Activated B cell treated with CpG ODN at 0.5 μM for 24 hours (primary cell): ENCODE measurements at regions of chr10 and their contacts with region 1.

Region 1: DNA sequence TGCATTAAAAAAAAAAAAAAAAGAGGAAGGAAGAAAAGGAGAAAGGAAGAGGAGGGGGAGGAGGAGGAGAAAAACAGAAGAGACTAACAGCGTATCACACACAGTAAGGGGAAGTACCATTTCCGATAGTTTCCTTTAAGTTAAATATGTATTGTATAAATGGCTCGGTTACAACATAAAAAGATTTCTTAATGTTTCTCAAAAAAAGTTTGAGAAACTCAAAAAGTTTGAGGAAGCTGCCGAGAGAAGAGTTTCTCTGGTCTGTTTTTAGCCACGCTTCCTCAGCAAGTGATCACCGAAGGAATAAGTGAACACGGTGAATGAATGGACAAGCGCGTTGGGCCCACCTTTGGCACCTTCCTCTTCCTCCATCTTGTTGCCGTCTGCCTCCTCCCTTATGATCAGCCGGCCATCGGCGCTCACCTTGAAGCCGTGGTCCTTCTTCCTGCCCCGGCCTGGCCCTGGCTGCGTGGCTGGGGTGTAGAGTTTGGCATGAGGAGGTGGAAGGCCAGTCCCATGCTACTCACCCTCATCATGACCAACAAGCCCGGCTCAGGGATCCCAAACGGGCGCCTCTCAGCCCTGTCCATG is 31.3 kb upstream of the FRAT2 start:
- DNase-seq: no peak
- ATAC-seq: peak; percentile 85
- H3K4me3 Mint-ChIP-seq: peak overlapping the region; percentile 56
- H3K27ac Mint-ChIP-seq: peak overlapping the region; percentile 90
- H3K4me1 Mint-ChIP-seq: peaks cover 36% of the 10 kb centered on the region
- H3K27me3 Mint-ChIP-seq: no peaks in the 10 kb centered on the region
- CTCF ChIP-seq: no peak

Region 2: DNA sequence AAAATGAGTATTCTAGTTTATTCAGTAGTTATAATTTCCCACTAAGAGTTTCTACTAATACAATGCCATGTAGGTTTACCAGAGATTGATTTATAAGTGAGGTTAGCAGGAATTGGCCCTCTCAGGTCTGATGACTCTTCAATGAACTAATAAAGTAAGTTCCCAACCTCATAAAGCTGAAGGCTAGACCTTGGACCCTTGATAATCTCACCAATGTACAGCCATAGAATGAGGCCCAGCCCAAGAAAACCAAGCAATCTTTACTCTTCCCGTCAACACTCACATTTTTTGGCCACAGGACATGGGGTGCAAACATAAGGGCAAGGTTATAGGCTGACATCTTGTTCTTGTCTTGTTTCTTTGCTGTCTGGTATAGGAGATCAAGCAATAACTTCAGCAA is 106.7 kb before region 1 on chr10:
- CTCF ChIA-PET with region 1: no interaction called
- POLR2A ChIA-PET with region 1: no interaction called
- intact Hi-C with region 1: no loop called
- DNase-seq: no peak
- ATAC-seq: no peak
- H3K4me3 Mint-ChIP-seq: no peak overlapping the region
- H3K27ac Mint-ChIP-seq: no peak overlapping the region
- H3K4me1 Mint-ChIP-seq: no peaks in the 10 kb centered on the region
- H3K27me3 Mint-ChIP-seq: no peaks in the 10 kb centered on the region
- CTCF ChIP-seq: no peak

Region 3: DNA sequence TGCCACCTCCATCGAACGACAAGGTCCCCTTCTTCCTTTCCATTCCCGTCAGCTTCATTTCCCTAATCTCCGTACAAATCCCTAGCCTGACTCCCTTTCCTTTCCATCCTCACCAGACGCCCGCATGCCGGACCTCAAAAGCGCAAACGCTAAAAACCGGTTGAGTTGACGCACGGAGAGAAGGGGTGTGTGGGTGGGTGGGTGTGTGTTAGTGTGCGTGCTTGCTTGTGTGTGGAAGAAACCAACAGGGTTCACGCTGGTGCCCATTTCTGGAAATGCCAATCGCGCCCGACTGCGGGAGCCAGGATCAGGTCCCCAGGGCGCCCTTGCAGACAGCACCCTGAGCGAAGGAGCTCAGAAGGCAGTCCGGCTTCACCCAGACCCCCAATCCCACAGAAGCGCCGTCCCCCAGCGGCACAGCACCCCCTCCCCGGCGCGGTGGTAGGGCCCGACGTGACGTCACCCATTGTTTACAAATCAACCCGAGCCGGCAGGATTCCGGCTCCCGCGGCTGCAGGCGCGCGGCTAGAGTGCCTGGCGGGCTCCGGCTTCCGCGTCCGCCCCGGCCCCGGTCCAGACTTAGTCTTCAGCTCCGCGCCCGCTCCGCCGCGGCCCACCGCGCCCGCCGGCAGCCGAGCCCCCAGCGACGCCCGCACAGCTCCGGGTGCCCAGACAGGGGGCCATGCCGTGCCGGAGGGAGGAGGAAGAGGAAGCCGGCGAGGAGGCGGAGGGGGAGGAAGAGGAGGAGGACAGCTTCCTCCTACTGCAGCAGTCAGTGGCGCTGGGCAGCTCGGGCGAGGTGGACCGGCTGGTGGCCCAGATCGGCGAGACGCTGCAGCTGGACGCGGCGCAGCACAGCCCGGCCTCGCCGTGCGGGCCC is 46.8 kb before region 1 on chr10 and contains the start of gene FRAT1:
- CTCF ChIA-PET with region 1: no interaction called
- POLR2A ChIA-PET with region 1: interaction called, 6 read pairs
- intact Hi-C with region 1: loop called (anchors 2 kb)
- DNase-seq: peak; percentile 91
- ATAC-seq: peak; percentile 66
- H3K4me3 Mint-ChIP-seq: peak within 1 kb of the TSS; percentile 92
- H3K27ac Mint-ChIP-seq: peak within 1 kb of the TSS; percentile 100
- H3K4me1 Mint-ChIP-seq: peaks cover 30% of the 10 kb centered on the region
- H3K27me3 Mint-ChIP-seq: no peaks in the 10 kb centered on the region
- CTCF ChIP-seq: no peak
- total RNA-seq, gene FRAT1: 6.9 TPM in 2 replicates

Region 4: GRCh38 chr10:97355571-97355975 is 10.3 kb before region 1 on chr10:
- CTCF ChIA-PET with region 1: no interaction called
- POLR2A ChIA-PET with region 1: no interaction called
- intact Hi-C with region 1: no loop called
- DNase-seq: no peak
- ATAC-seq: no peak
- H3K4me3 Mint-ChIP-seq: no peak overlapping the region
- H3K27ac Mint-ChIP-seq: no peak overlapping the region
- H3K4me1 Mint-ChIP-seq: no peaks in the 10 kb centered on the region
- H3K27me3 Mint-ChIP-seq: no peaks in the 10 kb centered on the region
- CTCF ChIP-seq: no peak